GM12878 (cell line): ENCODE measurements at regions of chr5 and their contacts with region 1.

Region 1: GRCh38 chr5:59380350-59380951 is 513.1 kb downstream of the PDE4D start:
- DNase-seq: peak; percentile 76
- ATAC-seq: peak; percentile 98
- H3K4me3 ChIP-seq: no peak overlapping the region
- H3K27ac ChIP-seq: no peak overlapping the region
- H3K4me1 ChIP-seq: no peaks in the 10 kb centered on the region
- H3K27me3 ChIP-seq: no peaks in the 10 kb centered on the region; a peak in 1 of 4 replicates
- CTCF ChIP-seq: peak; percentile 29 to 64 (median 53); a peak in 5 of 6 replicates
- EP300 ChIP-seq: peak; percentile 72 to 82; a peak in 3 of 4 replicates
- POLR2A ChIP-seq: no peak
- RAD21 ChIP-seq: peak; percentile 61

Region 2: GRCh38 chr5:59193616-59194319 is 186.7 kb before region 1 on chr5:
- CTCF ChIA-PET with region 1: interaction called, 70 read pairs
- POLR2A ChIA-PET with region 1: no interaction called
- RAD21 ChIA-PET with region 1: interaction called, 27 read pairs
- SMC1A ChIA-PET with region 1: interaction called, 24 read pairs
- in situ Hi-C with region 1: loop called (anchors 5 kb)
- intact Hi-C with region 1: loop called (anchors 1 kb)
- DNase-seq: no peak
- ATAC-seq: no peak
- H3K4me3 ChIP-seq: no peak overlapping the region
- H3K27ac ChIP-seq: no peak overlapping the region
- H3K4me1 ChIP-seq: no peaks in the 10 kb centered on the region
- H3K27me3 ChIP-seq: no peaks in the 10 kb centered on the region; a peak in 1 of 4 replicates
- CTCF ChIP-seq: no peak
- EP300 ChIP-seq: no peak
- POLR2A ChIP-seq: no peak
- RAD21 ChIP-seq: no peak

Region 3: DNA sequence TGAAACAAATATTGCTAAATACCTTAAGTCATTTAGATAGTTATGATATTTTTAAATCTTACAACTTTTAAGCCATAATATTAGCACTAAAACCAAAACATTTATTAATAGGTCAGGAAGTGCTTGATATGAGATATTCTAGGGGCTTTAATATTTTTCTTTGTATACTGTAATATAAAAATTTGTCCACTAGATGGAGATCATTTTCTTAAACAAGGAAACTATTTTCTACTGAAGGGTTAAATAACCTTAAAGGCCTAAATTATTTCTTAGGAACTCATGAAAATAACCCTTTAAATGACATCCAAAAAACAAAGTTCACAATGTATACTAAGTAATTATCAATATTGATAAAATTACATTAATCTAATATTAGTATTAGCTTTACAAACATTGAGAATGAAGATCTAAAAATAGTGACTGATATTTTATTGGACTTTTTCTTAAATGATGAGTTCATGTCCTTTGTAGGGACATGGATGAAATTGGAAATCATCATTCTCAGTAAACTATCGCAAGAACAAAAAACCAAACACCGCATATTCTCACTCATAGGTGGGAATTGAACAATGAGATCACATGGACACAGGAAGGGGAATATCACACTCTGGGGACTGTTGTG is 161.9 kb before region 1 on chr5:
- CTCF ChIA-PET with region 1: interaction called, 22 read pairs
- POLR2A ChIA-PET with region 1: no interaction called
- RAD21 ChIA-PET with region 1: interaction called, 5 read pairs
- SMC1A ChIA-PET with region 1: interaction called, 8 read pairs
- in situ Hi-C with region 1: no loop called
- intact Hi-C with region 1: loop called (anchors 1 kb)
- DNase-seq: no peak
- ATAC-seq: no peak
- H3K4me3 ChIP-seq: no peak overlapping the region
- H3K27ac ChIP-seq: no peak overlapping the region
- H3K4me1 ChIP-seq: no peaks in the 10 kb centered on the region
- H3K27me3 ChIP-seq: no peaks in the 10 kb centered on the region; a peak in 1 of 4 replicates
- CTCF ChIP-seq: no peak; a peak in 2 of 6 replicates
- EP300 ChIP-seq: no peak
- POLR2A ChIP-seq: no peak
- RAD21 ChIP-seq: no peak

Region 4: GRCh38 chr5:59367791-59368394 is 12.6 kb before region 1 on chr5:
- CTCF ChIA-PET with region 1: interaction called, 19 read pairs
- POLR2A ChIA-PET with region 1: no interaction called
- RAD21 ChIA-PET with region 1: interaction called, 8 read pairs
- SMC1A ChIA-PET with region 1: interaction called, 8 read pairs
- in situ Hi-C with region 1: no loop called
- intact Hi-C with region 1: no loop called
- DNase-seq: no peak
- ATAC-seq: peak; percentile 74
- H3K4me3 ChIP-seq: no peak overlapping the region
- H3K27ac ChIP-seq: no peak overlapping the region
- H3K4me1 ChIP-seq: no peaks in the 10 kb centered on the region
- H3K27me3 ChIP-seq: no peaks in the 10 kb centered on the region; a peak in 1 of 4 replicates
- CTCF ChIP-seq: peak; percentile 63 to 67 (median 66)
- EP300 ChIP-seq: no peak
- POLR2A ChIP-seq: no peak
- RAD21 ChIP-seq: peak; percentile 67